ENCODE measurements at regions of chr4 and their contacts with region 1.

Region 1: DNA sequence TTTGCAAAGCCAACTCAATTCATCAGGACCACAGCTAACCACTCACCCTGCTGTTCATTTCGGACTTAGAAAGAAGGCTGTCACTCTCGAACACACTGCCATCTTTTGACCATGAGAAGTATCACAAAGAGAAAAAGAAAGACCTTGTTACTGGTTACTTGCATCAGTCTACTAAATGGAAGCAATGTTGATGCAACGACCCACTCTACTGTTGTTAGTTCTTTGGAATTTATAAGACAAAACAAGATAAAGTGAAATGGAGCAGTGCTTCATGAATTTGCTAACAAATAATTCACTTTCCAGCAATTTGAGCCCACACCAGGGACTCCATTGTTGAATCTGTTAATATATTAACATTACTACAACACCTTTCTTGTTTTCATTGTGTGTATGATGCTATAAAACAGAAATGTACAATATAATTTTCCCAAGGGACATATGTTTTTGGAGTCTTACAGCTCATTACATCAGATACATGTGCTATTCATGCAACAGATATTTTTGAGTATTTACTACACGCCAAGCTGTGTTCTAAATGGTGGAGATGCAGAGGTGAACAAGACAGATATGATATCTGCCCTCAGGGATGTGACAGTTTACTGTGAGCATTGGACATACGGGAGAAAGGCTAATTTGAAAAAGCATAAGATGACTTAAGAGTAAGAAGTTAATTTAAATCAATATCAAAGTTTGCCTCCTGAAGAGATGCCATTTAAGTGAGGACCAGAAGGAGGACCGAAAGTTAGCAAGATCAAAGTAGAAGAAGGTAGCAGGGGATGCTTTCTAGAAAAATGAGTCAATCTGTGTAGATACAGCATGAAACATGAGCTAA is 87.2 kb downstream of the AREG start:
- DNase-seq: peak; percentile 20
- ATAC-seq: peak; percentile 74
- H3K4me3 Mint-ChIP-seq: no peak overlapping the region
- H3K27ac Mint-ChIP-seq: no peak overlapping the region
- H3K4me1 Mint-ChIP-seq: no peaks in the 10 kb centered on the region
- H3K27me3 Mint-ChIP-seq: peaks cover 2% of the 10 kb centered on the region

Region 2: GRCh38 chr4:74228691-74229640 is 303.2 kb before region 1 on chr4:
- CTCF ChIA-PET with region 1: interaction called, 6 read pairs
- POLR2A ChIA-PET with region 1: no interaction called
- intact Hi-C with region 1: loop called in 1 of 2 experiments (anchors 10 kb)
- DNase-seq: peak; percentile 87
- ATAC-seq: peak; percentile 85
- H3K4me3 Mint-ChIP-seq: no peak overlapping the region
- H3K27ac Mint-ChIP-seq: no peak overlapping the region
- H3K4me1 Mint-ChIP-seq: peaks cover 8% of the 10 kb centered on the region
- H3K27me3 Mint-ChIP-seq: no peaks in the 10 kb centered on the region

Region 3: GRCh38 chr4:74320559-74321118 is 211.5 kb before region 1 on chr4:
- CTCF ChIA-PET with region 1: interaction called, 4 read pairs
- POLR2A ChIA-PET with region 1: no interaction called
- intact Hi-C with region 1: loop called in 1 of 2 experiments (anchors 1 kb)
- DNase-seq: peak; percentile 66
- ATAC-seq: peak; percentile 99
- H3K4me3 Mint-ChIP-seq: no peak overlapping the region
- H3K27ac Mint-ChIP-seq: no peak overlapping the region
- H3K4me1 Mint-ChIP-seq: peaks cover 5% of the 10 kb centered on the region
- H3K27me3 Mint-ChIP-seq: peaks cover 2% of the 10 kb centered on the region

Region 4: DNA sequence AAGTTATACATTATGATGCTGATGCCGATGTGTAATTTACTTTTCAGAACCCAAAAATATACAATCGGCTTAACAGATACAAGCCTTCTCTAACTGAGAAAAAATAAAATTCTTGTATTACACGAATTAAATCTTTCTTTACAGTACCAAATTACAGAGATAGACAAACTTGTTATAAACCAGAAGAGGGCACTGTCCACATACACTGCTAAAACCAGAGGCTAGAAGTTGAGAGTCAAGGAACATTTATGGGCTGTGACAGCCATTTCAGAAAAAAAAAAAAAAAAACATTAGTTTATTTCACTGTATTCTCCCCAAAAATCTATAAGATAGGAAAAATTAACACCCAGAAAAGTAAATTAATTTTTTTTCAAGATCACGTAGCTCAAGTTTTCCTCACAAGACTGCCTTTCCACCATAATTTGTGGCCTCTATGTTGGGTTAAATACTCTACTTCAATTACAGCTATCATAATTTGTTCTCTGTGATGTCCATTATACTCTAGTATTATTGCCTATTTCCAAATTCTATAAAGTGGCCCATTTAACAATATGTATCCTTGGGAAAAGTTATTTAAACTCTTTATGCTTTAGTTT is 155.2 kb before region 1 on chr4:
- CTCF ChIA-PET with region 1: interaction called, 6 read pairs
- POLR2A ChIA-PET with region 1: no interaction called
- intact Hi-C with region 1: loop called (anchors 1 to 2 kb)
- DNase-seq: no peak
- ATAC-seq: peak; percentile 58
- H3K4me3 Mint-ChIP-seq: no peak overlapping the region
- H3K27ac Mint-ChIP-seq: no peak overlapping the region
- H3K4me1 Mint-ChIP-seq: peaks cover 4% of the 10 kb centered on the region
- H3K27me3 Mint-ChIP-seq: peaks cover 4% of the 10 kb centered on the region

Region 5: GRCh38 chr4:74543231-74543670 is 11.1 kb after region 1 on chr4:
- CTCF ChIA-PET with region 1: interaction called, 14 read pairs
- POLR2A ChIA-PET with region 1: no interaction called
- intact Hi-C with region 1: no loop called
- DNase-seq: peak; percentile 4
- ATAC-seq: no peak
- H3K4me3 Mint-ChIP-seq: no peak overlapping the region
- H3K27ac Mint-ChIP-seq: no peak overlapping the region
- H3K4me1 Mint-ChIP-seq: peaks cover 7% of the 10 kb centered on the region
- H3K27me3 Mint-ChIP-seq: no peaks in the 10 kb centered on the region